HEK293 (cell line): ENCODE measurements at regions of chr20 and their contacts with region 1.

Region 1: GRCh38 chr20:23235173-23236027 is 115.2 kb upstream of the NXT1 start:
- H3K4me3 ChIP-seq: no peak overlapping the region
- H3K27ac ChIP-seq: no peak overlapping the region
- H3K4me1 ChIP-seq: no peaks in the 10 kb centered on the region
- CTCF ChIP-seq: peak; percentile 64

Region 2: DNA sequence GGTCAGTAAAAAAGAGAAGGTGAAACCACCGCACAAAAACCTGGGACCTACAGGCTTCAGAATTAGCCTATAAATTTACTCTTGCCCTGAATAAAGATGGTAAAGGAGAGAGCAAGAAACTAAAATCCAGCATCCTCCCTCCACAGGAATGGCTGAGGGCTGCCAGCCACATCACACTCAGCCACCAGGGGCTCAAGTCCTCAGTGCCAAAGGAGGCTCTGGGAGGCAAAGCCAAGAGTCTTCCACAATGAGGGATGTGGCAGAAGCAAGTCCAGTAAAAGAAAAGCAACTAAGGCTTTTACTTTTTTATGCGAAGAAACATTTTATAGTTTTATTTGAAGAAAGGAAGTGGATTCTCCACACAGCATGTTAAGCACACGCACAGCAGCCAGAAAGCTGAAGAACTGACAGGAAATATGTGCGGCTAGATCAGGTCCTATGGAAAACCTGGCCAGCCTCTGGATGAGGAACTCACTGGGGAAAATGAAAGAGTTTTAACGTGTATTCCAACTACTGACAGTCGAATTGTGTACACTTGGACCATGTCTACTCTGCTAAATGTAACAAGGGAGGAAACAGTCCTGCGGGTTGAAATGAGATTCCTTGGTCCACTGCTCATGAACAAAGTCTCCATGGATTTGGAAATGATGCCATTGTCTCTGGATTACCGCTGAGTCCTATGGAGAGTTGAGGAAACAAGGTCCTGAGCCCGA is 419.6 kb before region 1 on chr20:
- CTCF ChIA-PET with region 1: no interaction called
- POLR2A ChIA-PET with region 1: no interaction called
- H3K4me3 ChIP-seq: no peak overlapping the region
- H3K27ac ChIP-seq: no peak overlapping the region
- H3K4me1 ChIP-seq: no peaks in the 10 kb centered on the region
- CTCF ChIP-seq: no peak

Region 3: DNA sequence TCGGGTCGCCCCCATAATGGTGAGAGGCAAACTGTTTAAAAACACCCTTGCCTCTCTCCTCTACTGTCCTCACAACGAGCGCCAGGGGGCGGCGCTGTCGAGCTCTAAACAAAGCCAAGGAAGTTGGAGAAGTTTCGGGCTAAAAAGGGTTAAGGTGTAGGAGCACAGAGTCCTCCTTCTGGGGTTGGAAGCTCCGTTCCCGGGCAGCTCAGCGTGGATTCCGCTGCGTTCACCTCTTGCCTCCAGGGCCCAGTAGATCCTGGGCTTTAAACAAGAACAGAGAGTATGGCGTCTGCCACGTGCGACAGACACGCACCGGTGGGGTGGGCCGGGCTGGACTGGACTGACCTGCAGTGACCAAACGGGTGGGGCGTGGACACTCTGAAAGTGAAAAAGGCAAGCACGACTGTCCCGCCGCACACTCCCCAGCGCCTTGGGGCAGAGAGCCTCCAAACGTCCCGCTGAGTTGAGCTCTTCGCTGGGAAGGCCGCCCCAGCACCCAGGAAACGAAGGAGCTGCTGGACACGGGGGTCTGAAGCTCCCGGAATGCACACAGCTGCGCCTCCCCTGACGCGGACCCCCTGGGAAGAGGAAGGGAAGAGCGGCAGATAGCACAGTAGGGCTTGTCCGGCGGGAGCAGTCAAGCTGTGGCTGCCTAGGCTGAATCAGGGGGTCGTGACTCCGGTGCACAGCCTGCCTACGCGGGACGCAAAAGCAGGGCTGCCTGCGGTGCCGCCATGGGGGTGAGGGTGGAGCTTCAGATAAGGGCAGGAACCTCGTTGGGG is 184.4 kb before region 1 on chr20:
- CTCF ChIA-PET with region 1: interaction called, 14 read pairs
- POLR2A ChIA-PET with region 1: no interaction called
- H3K4me3 ChIP-seq: peak overlapping the region; percentile 29
- H3K27ac ChIP-seq: no peak overlapping the region; the same call in 1 of the 2 replicates
- H3K4me1 ChIP-seq: no peaks in the 10 kb centered on the region
- CTCF ChIP-seq: peak; percentile 39

Region 4: GRCh38 chr20:23200918-23201317 is 34.5 kb before region 1 on chr20:
- CTCF ChIA-PET with region 1: interaction called, 10 read pairs
- POLR2A ChIA-PET with region 1: no interaction called
- H3K4me3 ChIP-seq: no peak overlapping the region
- H3K27ac ChIP-seq: no peak overlapping the region
- H3K4me1 ChIP-seq: no peaks in the 10 kb centered on the region
- CTCF ChIP-seq: peak; percentile 41; the same call in 1 of the 2 replicates

Region 5: GRCh38 chr20:23245553-23246181 is 10.3 kb after region 1 on chr20:
- CTCF ChIA-PET with region 1: interaction called, 38 read pairs
- POLR2A ChIA-PET with region 1: no interaction called
- H3K4me3 ChIP-seq: no peak overlapping the region
- H3K27ac ChIP-seq: no peak overlapping the region
- H3K4me1 ChIP-seq: no peaks in the 10 kb centered on the region
- CTCF ChIP-seq: peak; percentile 80

Region 6: GRCh38 chr20:23340524-23340923 is 105.1 kb after region 1 on chr20:
- CTCF ChIA-PET with region 1: interaction called, 23 read pairs
- POLR2A ChIA-PET with region 1: no interaction called
- H3K4me3 ChIP-seq: no peak overlapping the region
- H3K27ac ChIP-seq: no peak overlapping the region
- H3K4me1 ChIP-seq: no peaks in the 10 kb centered on the region
- CTCF ChIP-seq: peak; percentile 64